Endothelial cell of umbilical vein (primary cell): ENCODE measurements at regions of chr6 and their contacts with region 1.

Region 1: GRCh38 chr6:154510143-154510905 is at the start of gene CNKSR3:
- DNase-seq: peak; percentile 96
- H3K4me3 ChIP-seq: peak within 1 kb of the TSS; percentile 64 to 79 (median 78)
- H3K27ac ChIP-seq: peak within 1 kb of the TSS; percentile 77
- H3K4me1 ChIP-seq: peaks cover 15% of the 10 kb centered on the region
- H3K27me3 ChIP-seq: no peaks in the 10 kb centered on the region
- CTCF ChIP-seq: peak in 1 of 2 donors; percentile 35
- POLR2A ChIP-seq: no peak
- total RNA-seq, gene CNKSR3: 11.0 and 15.6 TPM in 2 replicates

Region 2: GRCh38 chr6:154156135-154156896 is 354.0 kb before region 1 on chr6:
- CTCF ChIA-PET with region 1: interaction called, 3 read pairs
- POLR2A ChIA-PET with region 1: no interaction called
- dilution Hi-C with region 1: no loop called
- intact Hi-C with region 1: loop called (anchors 2 kb)
- DNase-seq: peak; percentile 46
- H3K4me3 ChIP-seq: no peak overlapping the region
- H3K27ac ChIP-seq: no peak overlapping the region
- H3K4me1 ChIP-seq: no peaks in the 10 kb centered on the region
- H3K27me3 ChIP-seq: no peaks in the 10 kb centered on the region
- CTCF ChIP-seq: peak; percentile 68 to 81
- POLR2A ChIP-seq: no peak

Region 3: GRCh38 chr6:154386848-154387717 is 123.2 kb before region 1 on chr6:
- CTCF ChIA-PET with region 1: no interaction called
- POLR2A ChIA-PET with region 1: no interaction called
- dilution Hi-C with region 1: no loop called
- intact Hi-C with region 1: loop called (anchors 1 kb)
- DNase-seq: peak; percentile 82
- H3K4me3 ChIP-seq: no peak overlapping the region
- H3K27ac ChIP-seq: peak overlapping the region; percentile 50
- H3K4me1 ChIP-seq: peaks cover 17% of the 10 kb centered on the region
- H3K27me3 ChIP-seq: no peaks in the 10 kb centered on the region
- CTCF ChIP-seq: no peak
- POLR2A ChIP-seq: no peak

Region 4: DNA sequence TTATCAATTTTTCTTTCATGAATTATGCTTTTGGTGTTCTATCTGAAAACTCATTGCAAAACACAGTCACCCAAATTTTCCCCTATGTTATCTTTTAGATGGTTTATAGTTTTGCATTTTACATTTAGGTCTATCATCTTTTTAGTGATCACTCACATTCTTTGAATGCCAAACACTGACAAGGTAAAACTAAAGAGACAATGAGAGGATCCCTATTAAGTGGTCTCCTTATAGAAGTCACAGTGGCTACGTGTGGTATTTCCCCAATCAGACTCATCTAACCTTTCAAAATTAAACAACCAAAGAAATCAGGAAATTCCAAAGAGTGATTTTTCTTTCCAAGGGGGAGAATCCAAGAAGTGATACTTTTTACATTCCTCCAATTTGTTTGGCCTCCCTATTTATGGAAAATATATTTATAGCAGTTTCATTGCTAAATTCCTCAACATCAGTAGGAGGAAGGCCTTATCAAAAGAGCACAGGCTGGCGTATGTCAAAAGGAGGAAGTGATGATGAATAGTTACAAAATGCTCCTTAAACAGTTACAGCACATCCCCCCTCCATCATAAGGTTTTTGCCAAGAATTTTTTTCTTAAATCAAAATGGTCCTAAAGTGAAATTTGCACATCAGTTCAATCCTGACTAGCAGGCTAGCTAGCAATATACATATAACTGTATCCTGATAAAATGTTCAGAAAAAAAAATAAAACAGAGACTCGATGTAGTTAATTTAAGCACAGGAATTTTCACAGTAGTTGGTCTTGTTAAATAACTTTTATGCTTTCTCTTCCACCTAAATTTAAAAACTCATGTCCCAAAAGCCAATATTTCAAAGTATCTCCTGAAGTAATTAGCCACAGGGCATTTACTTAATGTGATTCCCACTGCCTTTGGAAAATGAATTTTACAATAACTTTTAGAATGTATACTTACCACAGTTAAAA is 77.5 kb before region 1 on chr6:
- CTCF ChIA-PET with region 1: no interaction called
- POLR2A ChIA-PET with region 1: interaction called, 3 read pairs
- dilution Hi-C with region 1: no loop called
- intact Hi-C with region 1: loop called (anchors 1 kb)
- DNase-seq: peak; percentile 94
- H3K4me3 ChIP-seq: no peak overlapping the region
- H3K27ac ChIP-seq: peak overlapping the region; percentile 39
- H3K4me1 ChIP-seq: peaks cover 21% of the 10 kb centered on the region
- H3K27me3 ChIP-seq: no peaks in the 10 kb centered on the region
- CTCF ChIP-seq: no peak
- POLR2A ChIP-seq: peak; percentile 83

Region 5: GRCh38 chr6:154448448-154449096 is 61.8 kb before region 1 on chr6:
- CTCF ChIA-PET with region 1: interaction called, 5 read pairs
- POLR2A ChIA-PET with region 1: interaction called, 8 read pairs
- dilution Hi-C with region 1: no loop called
- intact Hi-C with region 1: loop called (anchors 1 kb)
- DNase-seq: peak; percentile 77
- H3K4me3 ChIP-seq: no peak overlapping the region
- H3K27ac ChIP-seq: no peak overlapping the region
- H3K4me1 ChIP-seq: peaks cover 19% of the 10 kb centered on the region
- H3K27me3 ChIP-seq: no peaks in the 10 kb centered on the region
- CTCF ChIP-seq: peak in 1 of 2 donors; percentile 29
- POLR2A ChIP-seq: no peak

Region 6: GRCh38 chr6:154615483-154616025 is 105.2 kb after region 1 on chr6:
- CTCF ChIA-PET with region 1: interaction called, 3 read pairs
- POLR2A ChIA-PET with region 1: interaction called, 5 read pairs
- dilution Hi-C with region 1: no loop called
- intact Hi-C with region 1: loop called (anchors 2 kb)
- DNase-seq: peak; percentile 27
- H3K4me3 ChIP-seq: no peak overlapping the region
- H3K27ac ChIP-seq: no peak overlapping the region
- H3K4me1 ChIP-seq: peaks cover 22% of the 10 kb centered on the region
- H3K27me3 ChIP-seq: no peaks in the 10 kb centered on the region
- CTCF ChIP-seq: no peak
- POLR2A ChIP-seq: no peak

Region 7: DNA sequence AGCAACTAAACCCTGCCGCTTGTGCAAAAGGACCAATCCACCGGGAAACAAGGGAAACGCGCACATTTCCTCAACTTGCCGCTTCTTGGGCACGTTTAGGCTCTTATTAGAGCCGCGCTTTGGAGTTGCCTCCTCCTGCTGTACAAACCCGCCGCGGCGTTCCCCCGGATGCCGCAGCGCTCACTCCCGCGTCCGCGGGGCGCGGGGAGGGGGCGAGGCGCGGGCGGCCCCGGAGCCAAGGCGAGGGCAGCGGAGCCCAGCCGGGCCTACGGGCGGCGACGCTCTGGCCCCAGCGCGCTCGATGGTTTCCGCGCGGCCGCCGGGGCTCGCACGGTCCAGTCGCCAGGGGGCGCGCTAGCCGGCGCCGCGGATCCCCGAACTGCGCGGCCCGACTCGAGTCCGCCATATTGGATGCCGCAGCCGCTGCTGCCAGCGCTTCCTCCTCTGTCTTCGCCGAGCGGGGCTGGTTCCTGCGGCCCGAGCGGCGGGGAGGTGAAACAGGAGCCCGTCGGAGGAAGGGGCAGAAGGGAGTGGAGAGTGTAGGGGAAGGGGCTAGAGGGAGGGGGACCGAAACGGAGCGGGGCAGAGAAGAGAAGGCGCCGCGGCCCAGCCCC is 222.8 kb after region 1 on chr6 and contains the start of gene SCAF8:
- CTCF ChIA-PET with region 1: no interaction called
- POLR2A ChIA-PET with region 1: no interaction called
- dilution Hi-C with region 1: no loop called
- intact Hi-C with region 1: loop called (anchors 2 kb)
- DNase-seq: peak; percentile 81
- H3K4me3 ChIP-seq: peak within 1 kb of the TSS; percentile 74 to 96 (median 89)
- H3K27ac ChIP-seq: peak within 1 kb of the TSS; percentile 90
- H3K4me1 ChIP-seq: peaks cover 20% of the 10 kb centered on the region
- H3K27me3 ChIP-seq: no peaks in the 10 kb centered on the region
- CTCF ChIP-seq: peak; percentile 83 to 85
- POLR2A ChIP-seq: peak; percentile 84
- total RNA-seq, gene SCAF8: 37.4 and 37.8 TPM in 2 replicates